Posterior cingulate gyrus (tissue), 11 donors: ENCODE measurements at regions of chr15 and their contacts with region 1.

Region 1: GRCh38 chr15:57306161-57306943 is 70.0 kb upstream of the CGNL1 start:
- DNase-seq: peak; percentile 54 to 97 (median 86)

Region 2: GRCh38 chr15:56496635-56497034 is 809.7 kb before region 1 on chr15:
- intact Hi-C with region 1: loop called (anchors 2 kb)
- DNase-seq: no peak

Region 3: GRCh38 chr15:56886932-56887781 is 419.2 kb before region 1 on chr15:
- intact Hi-C with region 1: loop called (anchors 10 kb)
- DNase-seq: peak; percentile 86 to 99 (median 93)

Region 4: DNA sequence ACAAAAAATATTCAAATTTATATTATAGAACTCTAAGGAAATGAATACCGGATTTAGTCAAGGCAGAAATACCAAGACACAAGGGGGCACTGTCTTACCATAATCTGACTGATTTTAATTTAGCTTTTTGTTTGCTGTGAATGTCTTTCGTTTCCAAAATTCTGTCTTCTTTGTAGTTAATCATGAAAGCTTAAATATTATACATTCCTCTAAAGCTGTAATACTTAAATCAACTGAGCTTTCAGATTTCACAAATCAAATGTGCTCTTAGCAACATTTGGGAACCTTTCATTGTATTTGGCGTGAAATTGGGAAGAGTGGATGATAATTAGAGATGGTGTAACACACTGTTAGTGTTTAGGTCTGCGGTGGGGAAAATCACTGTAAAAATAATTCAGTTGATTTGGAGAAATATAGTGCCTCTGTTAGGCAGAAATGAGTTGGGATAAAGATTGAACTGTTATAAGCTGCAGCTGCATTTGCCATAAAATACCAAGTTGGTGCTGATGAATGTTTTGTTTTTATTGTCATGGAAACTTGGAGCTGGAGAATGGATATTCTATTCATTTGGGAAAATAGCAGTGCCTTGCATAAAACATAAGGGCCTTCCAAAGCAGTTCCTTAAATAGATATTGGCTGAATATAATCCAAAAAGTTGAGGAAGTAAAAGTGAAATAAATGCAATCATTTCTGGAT is 159.7 kb before region 1 on chr15:
- intact Hi-C with region 1: loop called (anchors 1 kb)
- DNase-seq: no peak

Region 5: DNA sequence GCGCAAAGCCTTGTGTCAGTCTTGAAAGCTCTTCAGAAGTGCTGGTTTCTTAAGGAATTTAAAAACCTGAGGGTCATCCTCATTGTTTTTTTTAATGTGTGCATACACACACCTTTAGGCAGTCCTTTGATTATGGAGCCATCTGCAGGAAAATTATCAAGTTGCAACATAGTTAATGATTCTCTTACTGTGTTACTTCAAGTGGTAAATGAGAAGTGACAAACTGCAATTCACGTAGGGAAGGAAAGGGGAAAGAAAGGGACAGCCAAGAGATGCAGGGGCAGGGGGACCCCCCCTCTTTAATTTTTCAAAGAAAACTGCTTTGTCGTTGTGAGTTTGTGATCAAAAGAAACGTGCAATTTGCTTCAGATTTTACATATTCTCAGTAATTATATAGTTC is 92.5 kb before region 1 on chr15:
- intact Hi-C with region 1: loop called (anchors 1 kb)
- DNase-seq: no peak

Region 6: DNA sequence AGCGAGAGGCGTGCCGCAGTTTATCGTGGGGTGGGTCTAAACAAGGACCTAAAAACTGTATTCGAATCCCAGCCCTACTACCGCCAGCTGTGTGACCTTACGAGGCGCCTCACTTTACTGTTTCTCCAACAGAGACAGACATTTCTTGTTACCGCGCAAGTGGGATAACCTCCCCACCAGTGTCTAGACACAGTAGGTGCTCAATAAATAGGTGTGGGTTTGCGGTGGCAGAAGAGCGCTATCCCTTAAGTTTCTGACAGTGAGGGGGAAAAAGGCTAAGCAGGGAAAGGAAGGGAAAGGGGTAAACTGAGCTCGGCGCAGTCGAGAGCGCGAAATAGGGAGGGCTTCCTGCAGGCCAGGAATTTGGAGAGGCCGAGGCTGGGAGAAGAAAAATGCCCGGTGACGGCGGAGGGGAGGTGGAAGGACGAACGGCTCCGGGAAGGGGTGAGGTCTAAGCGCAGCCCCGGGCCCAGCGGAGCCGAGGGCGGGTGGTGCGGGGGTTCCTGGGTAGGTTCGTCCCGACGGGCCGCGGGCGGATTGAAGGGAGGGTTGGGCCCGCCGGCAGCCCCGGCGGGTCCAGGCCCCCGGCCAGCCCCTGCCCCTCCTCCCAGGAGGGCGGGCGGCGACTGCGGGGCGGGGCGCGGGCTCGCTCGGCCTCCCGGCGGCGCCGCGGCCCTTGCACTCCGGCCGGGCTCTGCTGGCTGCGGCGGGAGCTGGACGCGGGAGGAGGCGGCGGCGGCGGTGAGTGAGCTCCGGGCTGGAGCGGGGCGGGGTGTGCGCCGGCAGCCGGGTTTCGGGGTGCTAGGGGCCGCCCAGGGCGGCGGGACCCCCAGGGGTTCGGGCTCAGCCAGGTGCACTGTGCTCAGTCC is 69.7 kb after region 1 on chr15 and contains the start of gene CGNL1:
- intact Hi-C with region 1: no loop called
- DNase-seq: peak in 7 of 10 donors; percentile 8 to 85 (median 39)